CD4-positive, alpha-beta T cell (primary cell): ENCODE measurements at regions of chr6 and their contacts with region 1.

Region 1: DNA sequence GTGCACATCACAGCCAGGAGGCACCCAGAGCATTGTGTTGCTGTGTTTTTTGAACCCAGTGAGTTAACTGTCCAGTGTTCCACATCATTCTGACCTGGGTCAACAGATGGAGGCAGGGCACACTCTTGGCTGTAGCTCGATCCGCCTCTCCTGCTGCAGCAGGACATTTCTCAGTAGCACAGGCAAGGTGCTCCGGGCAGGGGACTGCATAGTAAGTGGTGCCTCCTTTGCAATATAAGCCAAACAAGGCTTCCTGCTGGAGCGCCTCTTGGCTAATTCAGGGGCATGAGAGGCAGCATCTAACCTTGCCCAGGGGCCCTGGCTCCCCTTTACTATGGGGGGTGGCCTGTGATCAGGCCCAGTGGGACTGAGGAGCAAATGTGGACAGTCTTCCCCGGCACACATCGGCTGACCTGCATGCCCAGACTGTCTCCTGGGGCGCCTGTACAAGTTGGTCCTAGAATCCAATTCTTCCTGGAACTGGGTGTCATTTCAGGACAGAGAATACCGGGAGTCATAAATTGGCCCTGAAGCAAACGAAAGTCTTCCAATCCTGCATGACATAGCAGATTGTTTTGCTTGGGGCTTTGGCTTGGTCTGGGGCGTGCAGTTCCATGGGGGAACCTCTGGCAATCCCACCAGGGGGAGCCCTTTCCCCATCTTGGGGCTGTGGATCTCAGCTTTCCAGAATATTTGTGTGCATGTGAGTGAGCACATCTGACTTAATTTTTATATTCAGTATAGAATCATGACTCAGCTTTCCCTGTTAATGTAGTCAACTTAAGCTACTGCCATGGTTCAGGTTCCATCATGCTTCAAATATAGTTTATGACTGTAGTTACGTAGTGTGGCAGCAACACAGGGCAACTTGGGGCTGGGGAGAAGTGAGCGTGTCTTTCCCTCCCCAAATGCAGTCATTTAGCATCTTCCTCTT is 56.0 kb upstream of the DDR1 start:
- DNase-seq: peak; percentile 64 to 89 (median 80)
- ATAC-seq: peak; percentile 84
- H3K4me3 ChIP-seq: peak overlapping the region; percentile 62
- H3K4me3 Mint-ChIP-seq: peak overlapping the region; percentile 92
- H3K27ac ChIP-seq: peak overlapping the region in 1 of 2 donors; percentile 48
- H3K27ac Mint-ChIP-seq: peak overlapping the region; percentile 91
- H3K4me1 ChIP-seq: peaks cover 63% of the 10 kb centered on the region
- H3K4me1 Mint-ChIP-seq: peaks cover 79% of the 10 kb centered on the region
- H3K27me3 ChIP-seq: no peaks in the 10 kb centered on the region
- H3K27me3 Mint-ChIP-seq: no peaks in the 10 kb centered on the region
- CTCF ChIP-seq: peak; percentile 82

Region 2: DNA sequence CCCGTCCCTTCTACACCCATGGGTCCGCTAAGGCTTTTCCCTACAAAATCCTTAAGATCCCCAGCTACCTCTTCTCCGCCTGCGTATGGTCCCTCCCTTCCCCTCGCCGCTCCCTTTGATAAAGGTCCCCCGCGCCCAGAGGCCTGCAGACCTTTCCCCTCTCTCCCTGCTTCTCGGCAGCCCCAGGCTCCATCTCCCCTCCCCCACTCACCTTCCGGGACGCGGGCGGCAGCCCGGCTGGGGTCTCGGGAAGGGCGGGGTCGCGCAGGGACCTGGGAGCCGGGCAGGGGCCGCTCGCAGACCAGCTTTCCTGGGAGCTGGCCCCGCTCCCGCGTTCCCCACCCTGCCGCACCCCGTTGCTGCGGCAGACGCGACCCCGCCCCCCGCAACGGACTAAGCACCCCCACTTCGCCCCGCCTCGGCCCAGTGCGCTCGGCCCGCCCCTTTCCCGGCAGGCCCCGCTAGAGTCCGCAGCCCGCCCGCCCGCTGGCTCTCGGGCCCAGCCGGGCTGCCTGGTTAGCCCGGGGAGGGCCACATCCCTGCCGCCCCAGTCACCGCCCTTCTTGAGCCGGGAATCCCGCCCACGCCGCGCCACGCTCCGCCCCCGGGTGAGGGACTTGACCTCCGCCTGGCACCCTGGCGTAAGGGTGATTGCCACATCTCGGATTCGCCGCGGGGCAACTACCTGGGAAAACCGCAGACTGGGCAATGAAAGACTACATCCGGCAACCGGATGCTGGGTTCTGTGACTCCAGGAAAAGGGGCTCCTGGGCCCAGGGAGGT is 85.8 kb before region 1 on chr6 and contains the start of gene FLOT1:
- CTCF ChIA-PET with region 1: interaction called, 12 read pairs
- POLR2A ChIA-PET with region 1: interaction called, 3 read pairs
- intact Hi-C with region 1: loop called (anchors 2 to 5 kb)
- DNase-seq: peak; percentile 52 to 93 (median 76)
- ATAC-seq: peak; percentile 53
- H3K4me3 ChIP-seq: peak within 1 kb of the TSS; percentile 85
- H3K4me3 Mint-ChIP-seq: peak within 1 kb of the TSS; percentile 97
- H3K27ac ChIP-seq: peak within 1 kb of the TSS; percentile 31 to 76
- H3K27ac Mint-ChIP-seq: peak within 1 kb of the TSS; percentile 91
- H3K4me1 ChIP-seq: peaks cover 66% of the 10 kb centered on the region
- H3K4me1 Mint-ChIP-seq: peaks cover 61% of the 10 kb centered on the region
- H3K27me3 ChIP-seq: no peaks in the 10 kb centered on the region
- H3K27me3 Mint-ChIP-seq: no peaks in the 10 kb centered on the region
- CTCF ChIP-seq: no peak
- total RNA-seq, gene FLOT1: 31.6 TPM

Region 3: GRCh38 chr6:30877419-30878371 is 49.4 kb after region 1 on chr6:
- CTCF ChIA-PET with region 1: interaction called, 5 read pairs
- POLR2A ChIA-PET with region 1: interaction called, 3 read pairs
- intact Hi-C with region 1: loop called (anchors 1 kb)
- DNase-seq: peak; percentile 55 to 86 (median 71)
- ATAC-seq: peak; percentile 74
- H3K4me3 ChIP-seq: peak overlapping the region; percentile 48
- H3K4me3 Mint-ChIP-seq: peak overlapping the region; percentile 34
- H3K27ac ChIP-seq: no peak overlapping the region
- H3K27ac Mint-ChIP-seq: peak overlapping the region; percentile 1
- H3K4me1 ChIP-seq: peaks cover 13% of the 10 kb centered on the region
- H3K4me1 Mint-ChIP-seq: peaks cover 19% of the 10 kb centered on the region
- H3K27me3 ChIP-seq: no peaks in the 10 kb centered on the region
- H3K27me3 Mint-ChIP-seq: no peaks in the 10 kb centered on the region
- CTCF ChIP-seq: peak; percentile 91

Region 4: GRCh38 chr6:31079656-31080261 is 251.5 kb after region 1 on chr6:
- CTCF ChIA-PET with region 1: interaction called, 10 read pairs
- POLR2A ChIA-PET with region 1: interaction called, 6 read pairs
- intact Hi-C with region 1: no loop called
- DNase-seq: peak; percentile 52 to 82 (median 63)
- ATAC-seq: peak; percentile 94
- H3K4me3 ChIP-seq: peak overlapping the region; percentile 35
- H3K4me3 Mint-ChIP-seq: peak overlapping the region; percentile 61
- H3K27ac ChIP-seq: no peak overlapping the region
- H3K27ac Mint-ChIP-seq: no peak overlapping the region
- H3K4me1 ChIP-seq: peaks cover 9% of the 10 kb centered on the region
- H3K4me1 Mint-ChIP-seq: peaks cover 9% of the 10 kb centered on the region
- H3K27me3 ChIP-seq: no peaks in the 10 kb centered on the region
- H3K27me3 Mint-ChIP-seq: peaks cover 5% of the 10 kb centered on the region
- CTCF ChIP-seq: peak; percentile 96